ENCODE measurements at regions of chr6 and their contacts with region 1.

Region 1: DNA sequence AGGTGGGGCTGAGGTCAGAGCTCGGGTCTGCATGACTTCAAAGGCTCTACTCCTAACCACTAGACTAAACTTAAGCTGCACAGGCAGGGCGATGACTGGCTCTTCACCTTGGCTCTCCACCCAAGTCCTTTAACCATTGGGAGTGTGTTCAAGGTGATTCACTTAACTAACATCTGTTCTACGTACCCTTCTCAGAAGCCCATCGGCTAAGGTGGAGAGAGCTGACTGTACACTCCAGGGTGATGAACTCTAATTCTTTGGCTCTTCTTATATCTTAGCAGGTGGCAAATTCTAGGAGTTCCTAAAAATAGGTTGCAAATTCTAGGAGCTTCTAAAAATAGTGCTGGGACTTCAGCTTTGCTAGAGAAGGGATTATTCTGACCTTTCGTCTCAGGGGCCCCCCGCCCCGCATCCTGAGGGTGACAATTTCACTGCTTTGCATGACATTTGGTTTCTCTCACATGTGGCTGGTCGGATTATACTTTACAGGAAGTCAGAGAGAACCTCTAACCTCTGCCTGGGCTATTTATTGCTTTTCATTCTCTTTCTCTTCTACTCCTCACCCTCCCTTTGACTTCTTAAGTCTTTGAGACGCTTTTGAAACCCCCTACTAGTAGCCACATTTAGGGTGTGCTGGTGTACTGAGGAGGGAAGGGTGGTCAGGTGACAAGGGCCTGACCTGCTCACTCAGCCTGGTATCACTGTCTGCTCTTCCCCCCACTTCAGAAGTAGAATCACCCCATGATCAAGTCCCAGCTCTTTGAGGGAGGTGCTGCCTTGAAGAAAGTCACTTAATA is 55.5 kb downstream of the PRDM1 start:
- DNase-seq: no peak
- H3K4me3 ChIP-seq: no peak overlapping the region
- H3K27ac ChIP-seq: no peak overlapping the region
- H3K4me1 ChIP-seq: no peaks in the 10 kb centered on the region
- H3K27me3 ChIP-seq: no peaks in the 10 kb centered on the region
- CTCF ChIP-seq: no peak
- POLR2A ChIP-seq: no peak

Region 2: GRCh38 chr6:106117579-106117978 is 24.1 kb before region 1 on chr6:
- intact Hi-C with region 1: no loop called
- DNase-seq: no peak
- H3K4me3 ChIP-seq: no peak overlapping the region
- H3K27ac ChIP-seq: peak overlapping the region in 1 of 2 donors; percentile 83
- H3K4me1 ChIP-seq: peaks cover 0 to 10% of the 10 kb centered on the region in 2 donors
- H3K27me3 ChIP-seq: no peaks in the 10 kb centered on the region
- CTCF ChIP-seq: no peak
- POLR2A ChIP-seq: no peak

Region 3: DNA sequence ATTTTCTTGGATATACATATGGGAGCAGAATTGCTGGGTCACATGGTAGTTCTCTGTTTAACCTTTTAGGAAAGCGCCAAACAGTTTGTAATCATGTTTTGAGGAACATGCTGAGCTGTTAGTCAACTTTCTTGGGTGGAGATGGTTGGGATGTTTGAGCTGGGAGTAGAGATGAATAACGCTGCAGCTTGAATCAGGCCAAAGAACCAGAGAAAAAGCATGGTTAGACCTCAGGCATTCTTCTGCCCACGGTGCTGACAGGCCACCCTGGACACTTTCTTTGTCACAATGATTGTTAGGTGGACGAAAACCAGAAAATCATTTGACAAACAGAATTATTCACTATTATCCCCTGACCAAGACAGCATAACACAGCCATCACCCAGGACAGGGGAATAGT is 11.3 kb after region 1 on chr6:
- intact Hi-C with region 1: loop called (anchors 1 kb)
- DNase-seq: no peak
- H3K4me3 ChIP-seq: no peak overlapping the region
- H3K27ac ChIP-seq: no peak overlapping the region
- H3K4me1 ChIP-seq: no peaks in the 10 kb centered on the region
- H3K27me3 ChIP-seq: no peaks in the 10 kb centered on the region
- CTCF ChIP-seq: no peak
- POLR2A ChIP-seq: no peak

Region 4: GRCh38 chr6:106377061-106377540 is 235.5 kb after region 1 on chr6:
- intact Hi-C with region 1: no loop called
- DNase-seq: no peak
- H3K4me3 ChIP-seq: no peak overlapping the region
- H3K27ac ChIP-seq: peak overlapping the region; percentile 71 to 78
- H3K4me1 ChIP-seq: peaks cover 0 to 16% of the 10 kb centered on the region in 2 donors
- H3K27me3 ChIP-seq: no peaks in the 10 kb centered on the region
- CTCF ChIP-seq: no peak
- POLR2A ChIP-seq: no peak